HCT116 (cell line): ENCODE measurements at regions of chr11 and their contacts with region 1.

Region 1: GRCh38 chr11:119709638-119710346 is 19.2 kb downstream of the NECTIN1 start:
- DNase-seq: no peak
- ATAC-seq: no peak
- H3K4me3 ChIP-seq: no peak overlapping the region
- H3K27ac ChIP-seq: no peak overlapping the region
- H3K4me1 ChIP-seq: peaks cover 6% of the 10 kb centered on the region in 2 experiments; a peak in 2 of 4 replicates
- H3K27me3 ChIP-seq: no peaks in the 10 kb centered on the region
- CTCF ChIP-seq: no peak
- POLR2A ChIP-seq: no peak
- RAD21 ChIP-seq: no peak

Region 2: GRCh38 chr11:119721129-119722120 is 11.6 kb after region 1 on chr11:
- CTCF ChIA-PET with region 1: interaction called, 17 read pairs
- POLR2A ChIA-PET with region 1: no interaction called
- RAD21 ChIA-PET with region 1: no interaction called
- intact Hi-C with region 1: no loop called
- DNase-seq: no peak
- ATAC-seq: peak; percentile 97
- H3K4me3 ChIP-seq: no peak overlapping the region
- H3K27ac ChIP-seq: no peak overlapping the region
- H3K4me1 ChIP-seq: peaks cover 6 to 19% of the 10 kb centered on the region in 2 experiments
- H3K27me3 ChIP-seq: no peaks in the 10 kb centered on the region
- CTCF ChIP-seq: peak; percentile 30 to 75 (median 64); a peak in 5 of 6 replicates
- POLR2A ChIP-seq: no peak
- RAD21 ChIP-seq: no peak

Region 3: DNA sequence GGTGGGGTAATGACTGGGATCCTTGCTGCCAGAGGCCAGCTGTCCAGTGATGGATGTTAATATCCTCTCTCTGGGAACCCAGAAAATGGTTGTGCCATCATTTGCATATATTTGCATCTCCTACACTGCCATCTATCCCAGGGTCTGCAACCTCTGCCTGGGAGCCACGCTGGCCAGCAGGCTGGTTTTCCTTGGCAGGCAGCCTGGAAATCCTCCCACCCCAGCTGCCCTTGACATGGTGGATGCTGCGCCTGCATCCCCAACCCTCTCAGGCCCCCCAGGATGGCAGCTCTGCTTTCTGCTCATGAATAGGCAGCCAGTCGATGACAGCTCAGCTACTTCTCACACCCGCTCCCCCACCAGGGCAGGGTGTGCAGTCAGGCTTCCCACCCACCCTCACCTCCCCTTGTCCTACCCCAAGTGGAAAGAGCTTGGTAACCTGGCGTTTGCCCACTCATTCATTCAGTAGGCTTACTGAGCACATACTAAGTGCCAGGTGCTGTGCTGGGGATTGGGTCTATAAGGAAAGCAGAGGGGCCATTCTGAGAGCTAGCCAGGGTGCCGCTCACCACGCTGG is 225.6 kb after region 1 on chr11:
- CTCF ChIA-PET with region 1: no interaction called
- POLR2A ChIA-PET with region 1: no interaction called
- RAD21 ChIA-PET with region 1: no interaction called
- intact Hi-C with region 1: no loop called
- DNase-seq: no peak
- ATAC-seq: no peak
- H3K4me3 ChIP-seq: no peak overlapping the region
- H3K27ac ChIP-seq: no peak overlapping the region
- H3K4me1 ChIP-seq: no peaks in the 10 kb centered on the region
- H3K27me3 ChIP-seq: peaks cover 60% of the 10 kb centered on the region
- CTCF ChIP-seq: no peak
- POLR2A ChIP-seq: no peak
- RAD21 ChIP-seq: no peak

Region 4: DNA sequence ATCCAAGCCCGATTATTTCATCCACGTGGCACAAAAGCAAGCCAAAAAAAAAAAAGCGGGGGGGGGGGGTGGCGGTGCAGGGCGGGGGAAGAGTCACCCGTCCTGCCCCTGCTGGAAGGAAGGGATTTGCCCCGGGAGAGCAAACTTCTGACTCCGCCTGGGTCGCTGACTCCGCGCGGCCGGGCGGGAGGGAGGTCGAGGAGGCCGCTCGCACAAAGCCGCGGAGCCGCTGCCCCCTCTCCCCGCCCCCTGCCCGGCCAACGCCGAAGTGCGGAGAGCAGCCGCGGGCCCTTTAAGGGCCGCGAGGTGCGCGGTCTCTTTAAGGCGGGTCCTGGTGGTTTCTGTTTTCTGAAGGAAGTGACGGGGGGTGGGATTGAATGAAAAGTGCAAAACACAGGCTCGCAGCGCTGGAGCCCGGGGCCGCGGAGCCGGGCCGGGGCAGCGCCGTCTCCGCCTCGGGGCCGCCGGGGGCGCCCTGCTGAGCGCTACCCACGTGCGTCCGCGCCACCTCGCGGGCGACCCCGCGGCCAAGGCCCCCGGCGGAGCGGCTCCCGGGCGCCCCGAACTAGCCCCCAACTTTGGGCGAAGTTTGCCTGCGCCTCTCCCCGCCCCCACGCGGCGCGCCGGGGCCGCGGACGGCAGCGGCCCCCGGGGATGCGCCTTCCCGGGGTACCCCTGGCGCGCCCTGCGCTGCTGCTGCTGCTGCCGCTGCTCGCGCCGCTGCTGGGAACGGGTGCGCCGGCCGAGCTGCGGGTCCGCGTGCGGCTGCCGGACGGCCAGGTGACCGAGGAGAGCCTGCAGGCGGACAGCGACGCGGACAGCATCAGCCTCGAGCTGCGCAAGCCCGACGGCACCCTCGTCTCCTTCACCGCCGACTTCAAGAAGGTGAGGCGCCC is 501.1 kb after region 1 on chr11 and contains the start of gene OAF:
- CTCF ChIA-PET with region 1: no interaction called
- POLR2A ChIA-PET with region 1: no interaction called
- RAD21 ChIA-PET with region 1: no interaction called
- intact Hi-C with region 1: loop called (anchors 5 kb)
- DNase-seq: peak; percentile 55
- ATAC-seq: peak; percentile 84
- H3K4me3 ChIP-seq: peak within 1 kb of the TSS; percentile 69 to 78
- H3K27ac ChIP-seq: peak within 1 kb of the TSS; percentile 74
- H3K4me1 ChIP-seq: peaks cover 23 to 52% of the 10 kb centered on the region in 2 experiments
- H3K27me3 ChIP-seq: no peaks in the 10 kb centered on the region
- CTCF ChIP-seq: peak in 2 of 3 experiments; percentile 9 to 22; a peak in 2 of 6 replicates
- POLR2A ChIP-seq: peak; percentile 64
- RAD21 ChIP-seq: no peak
- total RNA-seq, gene OAF: 32.3 TPM